Activated CD4-positive, alpha-beta memory T cell treated with anti-CD3 and anti-CD28 coated beads, Interleukin-2, amount 10 ng/mL, durations not matched to agents 7 days and 5 days (primary cell): ENCODE measurements at regions of chr7 and their contacts with region 1.

Region 1: GRCh38 chr7:100691676-100692577 is 2.1 kb downstream of the GIGYF1 start:
- DNase-seq: peak; percentile 84
- H3K4me3 Mint-ChIP-seq: peak overlapping the region; percentile 96
- H3K27ac Mint-ChIP-seq: peak overlapping the region; percentile 42
- H3K4me1 Mint-ChIP-seq: peaks cover 37% of the 10 kb centered on the region
- H3K27me3 Mint-ChIP-seq: peaks cover 10% of the 10 kb centered on the region

Region 2: GRCh38 chr7:100611974-100612729 is 79.8 kb before region 1 on chr7 and contains the start of gene MOSPD3:
- CTCF ChIA-PET with region 1: interaction called, 32 read pairs
- POLR2A ChIA-PET with region 1: interaction called, 8 read pairs
- DNase-seq: peak; percentile 98
- H3K4me3 Mint-ChIP-seq: peak within 1 kb of the TSS; percentile 95
- H3K27ac Mint-ChIP-seq: peak within 1 kb of the TSS; percentile 99
- H3K4me1 Mint-ChIP-seq: peaks cover 26% of the 10 kb centered on the region
- H3K27me3 Mint-ChIP-seq: peaks cover 2% of the 10 kb centered on the region
- total RNA-seq, gene MOSPD3: 47.2 to 53.3 TPM

Region 3: GRCh38 chr7:100626530-100627237 is 65.2 kb before region 1 on chr7:
- CTCF ChIA-PET with region 1: interaction called, 73 read pairs
- POLR2A ChIA-PET with region 1: interaction called, 9 read pairs
- DNase-seq: peak; percentile 94
- H3K4me3 Mint-ChIP-seq: peak overlapping the region; percentile 76
- H3K27ac Mint-ChIP-seq: peak overlapping the region; percentile 86
- H3K4me1 Mint-ChIP-seq: peaks cover 74% of the 10 kb centered on the region
- H3K27me3 Mint-ChIP-seq: no peaks in the 10 kb centered on the region

Region 4: GRCh38 chr7:100632951-100633717 is 58.8 kb before region 1 on chr7:
- CTCF ChIA-PET with region 1: interaction called, 73 read pairs
- POLR2A ChIA-PET with region 1: interaction called, 13 read pairs
- DNase-seq: peak; percentile 70
- H3K4me3 Mint-ChIP-seq: peak overlapping the region; percentile 81
- H3K27ac Mint-ChIP-seq: peak overlapping the region; percentile 79
- H3K4me1 Mint-ChIP-seq: peaks cover 48% of the 10 kb centered on the region
- H3K27me3 Mint-ChIP-seq: peaks cover 6% of the 10 kb centered on the region

Region 5: DNA sequence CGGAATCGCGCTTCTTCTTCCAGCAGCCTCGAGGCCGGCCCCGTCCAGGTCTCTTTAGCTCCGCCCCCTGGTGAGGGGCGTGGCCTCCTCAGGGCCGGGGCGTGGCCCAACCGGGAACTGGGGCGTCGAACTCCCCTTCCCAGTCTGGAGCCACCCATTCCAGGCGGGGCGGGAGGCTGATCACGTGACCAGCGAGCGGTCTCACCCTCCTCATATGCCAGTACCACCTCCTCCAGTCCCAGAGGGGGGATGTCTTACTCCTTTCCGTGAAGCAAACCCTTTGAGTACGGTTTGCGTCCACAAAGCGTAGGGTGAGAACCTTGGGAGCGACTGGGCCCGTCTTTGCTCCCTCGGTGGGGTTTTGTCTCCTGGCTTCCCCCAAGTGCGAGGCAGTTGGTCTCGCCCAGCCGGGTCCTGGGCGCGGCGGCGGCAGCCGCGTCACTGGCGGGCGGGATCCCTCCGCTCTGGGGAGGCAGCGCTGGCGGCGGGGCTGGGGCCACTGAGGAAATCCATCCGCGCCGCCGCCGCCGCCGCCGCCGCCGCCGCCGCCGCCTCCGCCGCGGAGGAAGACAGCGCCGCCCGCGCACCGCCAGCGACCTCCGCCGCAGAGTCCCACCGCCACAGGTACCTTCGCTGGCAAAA is 18.5 kb before region 1 on chr7 and contains the start of gene GNB2:
- CTCF ChIA-PET with region 1: interaction called, 23 read pairs
- POLR2A ChIA-PET with region 1: interaction called, 6 read pairs
- DNase-seq: peak; percentile 99
- H3K4me3 Mint-ChIP-seq: peak within 1 kb of the TSS; percentile 98
- H3K27ac Mint-ChIP-seq: peak within 1 kb of the TSS; percentile 93
- H3K4me1 Mint-ChIP-seq: peaks cover 21% of the 10 kb centered on the region
- H3K27me3 Mint-ChIP-seq: peaks cover 10% of the 10 kb centered on the region
- total RNA-seq, gene GNB2: 263 to 266 TPM

Region 6: DNA sequence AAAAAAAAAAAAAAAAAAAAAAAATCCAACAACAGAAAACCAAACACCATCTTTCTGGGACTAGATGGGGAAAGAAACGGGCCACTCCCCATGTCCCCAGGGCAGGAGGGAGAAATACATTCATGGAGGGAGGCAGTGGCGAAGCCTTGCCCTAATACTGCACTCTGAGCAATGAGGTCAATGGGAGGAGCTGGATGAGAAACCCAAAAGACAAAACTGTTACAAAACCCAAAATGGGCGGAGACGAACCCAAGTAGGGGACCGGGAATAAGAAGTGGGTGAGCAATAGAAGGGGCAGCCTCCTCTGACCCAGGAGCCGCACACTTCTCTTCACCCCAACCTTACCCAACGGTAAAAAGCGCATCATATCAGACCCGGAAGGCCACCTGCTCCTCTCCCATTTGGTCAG is 11.8 kb before region 1 on chr7:
- CTCF ChIA-PET with region 1: interaction called, 23 read pairs
- POLR2A ChIA-PET with region 1: interaction called, 51 read pairs
- DNase-seq: no peak
- H3K4me3 Mint-ChIP-seq: no peak overlapping the region
- H3K27ac Mint-ChIP-seq: peak overlapping the region; percentile 31
- H3K4me1 Mint-ChIP-seq: peaks cover 36% of the 10 kb centered on the region
- H3K27me3 Mint-ChIP-seq: no peaks in the 10 kb centered on the region

Region 7: DNA sequence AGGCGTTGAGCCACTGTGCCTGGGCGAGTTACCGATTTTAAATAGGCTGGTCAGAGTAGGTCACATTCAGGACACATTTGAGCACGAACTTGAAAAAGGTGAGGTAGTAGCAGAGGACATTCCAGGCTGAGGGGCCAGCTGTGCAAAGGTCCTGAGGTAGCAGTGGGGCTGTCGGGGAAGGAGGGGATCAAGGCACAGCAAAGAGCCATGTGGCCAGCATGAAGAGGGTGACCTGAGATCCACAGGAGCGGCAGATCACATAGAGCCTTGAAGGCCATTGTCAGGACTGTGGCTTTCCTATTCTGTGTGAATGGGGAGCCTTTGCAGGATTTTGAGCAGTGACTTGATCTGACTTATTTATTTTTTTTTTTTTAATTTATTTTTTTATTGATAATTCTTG is 48.0 kb after region 1 on chr7:
- CTCF ChIA-PET with region 1: no interaction called
- POLR2A ChIA-PET with region 1: no interaction called
- DNase-seq: no peak
- H3K4me3 Mint-ChIP-seq: no peak overlapping the region
- H3K27ac Mint-ChIP-seq: no peak overlapping the region
- H3K4me1 Mint-ChIP-seq: no peaks in the 10 kb centered on the region
- H3K27me3 Mint-ChIP-seq: peaks cover 4% of the 10 kb centered on the region

Region 8: GRCh38 chr7:100803398-100804233 is 111.7 kb after region 1 on chr7:
- CTCF ChIA-PET with region 1: no interaction called
- POLR2A ChIA-PET with region 1: no interaction called
- DNase-seq: peak; percentile 65
- H3K4me3 Mint-ChIP-seq: no peak overlapping the region
- H3K27ac Mint-ChIP-seq: no peak overlapping the region
- H3K4me1 Mint-ChIP-seq: peaks cover 11% of the 10 kb centered on the region
- H3K27me3 Mint-ChIP-seq: peaks cover 7% of the 10 kb centered on the region